Posterior vena cava (tissue), 2 donors: ENCODE measurements at regions of chr3 and their contacts with region 1.

Region 1: DNA sequence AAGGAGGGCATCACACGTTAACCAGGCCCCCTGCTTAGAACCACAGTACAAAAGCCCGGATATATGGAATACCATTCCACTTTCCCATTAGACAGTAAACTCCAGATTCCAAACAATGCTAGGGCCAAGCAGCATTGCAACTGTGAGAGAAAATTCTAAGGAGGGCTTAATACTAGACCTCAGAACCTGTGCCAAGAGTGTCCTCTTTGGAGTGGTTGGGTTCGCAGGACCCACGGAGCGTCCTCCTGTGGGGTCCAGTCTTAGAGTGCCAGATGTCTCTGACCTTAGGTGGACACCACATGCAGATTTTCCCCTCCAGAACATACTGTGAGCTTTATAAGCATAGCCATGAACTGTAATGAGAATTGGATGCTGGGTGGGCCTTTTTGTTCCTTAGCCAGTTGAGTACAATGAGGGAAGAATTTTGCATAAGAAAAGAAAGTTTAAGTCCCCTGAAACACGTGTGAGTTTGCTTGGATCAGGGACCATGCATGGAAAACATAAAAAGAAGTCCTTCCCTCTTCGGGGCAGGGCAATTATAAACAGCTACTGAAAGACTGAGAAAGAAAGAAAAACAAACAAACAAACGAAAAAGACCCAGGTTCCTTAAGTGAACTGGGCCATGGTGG is 325.7 kb downstream of the NEK10 start:
- DNase-seq: no peak

Region 2: DNA sequence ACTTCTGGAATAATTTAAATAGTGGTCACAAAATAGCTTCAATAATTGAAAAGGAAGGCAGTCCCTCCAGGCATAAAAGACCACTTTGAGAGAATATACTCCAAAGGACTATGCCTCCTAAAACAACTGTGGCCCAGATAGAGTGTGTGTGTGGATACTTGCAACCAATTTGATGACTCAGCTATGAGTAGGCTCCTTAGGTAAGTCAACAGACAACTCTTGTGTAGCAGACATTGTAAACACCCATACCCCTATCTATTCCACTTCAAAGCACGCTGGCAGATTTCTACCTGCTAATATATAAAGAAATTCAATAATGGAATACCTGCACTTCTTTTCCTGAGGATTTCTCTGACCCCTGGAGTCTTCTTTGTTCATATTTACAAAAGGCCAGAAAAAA is 71.2 kb after region 1 on chr3:
- intact Hi-C with region 1: no loop called
- DNase-seq: no peak

Region 3: GRCh38 chr3:27216955-27217552 is 173.6 kb after region 1 on chr3:
- intact Hi-C with region 1: no loop called
- DNase-seq: no peak

Region 4: GRCh38 chr3:27289769-27290413 is 246.4 kb after region 1 on chr3:
- intact Hi-C with region 1: loop called in 1 of 2 experiments (anchors 5 kb)
- DNase-seq: no peak